Naive thymus-derived CD4-positive, alpha-beta T cell (primary cell): ENCODE measurements at regions of chr9 and their contacts with region 1.

Region 1: DNA sequence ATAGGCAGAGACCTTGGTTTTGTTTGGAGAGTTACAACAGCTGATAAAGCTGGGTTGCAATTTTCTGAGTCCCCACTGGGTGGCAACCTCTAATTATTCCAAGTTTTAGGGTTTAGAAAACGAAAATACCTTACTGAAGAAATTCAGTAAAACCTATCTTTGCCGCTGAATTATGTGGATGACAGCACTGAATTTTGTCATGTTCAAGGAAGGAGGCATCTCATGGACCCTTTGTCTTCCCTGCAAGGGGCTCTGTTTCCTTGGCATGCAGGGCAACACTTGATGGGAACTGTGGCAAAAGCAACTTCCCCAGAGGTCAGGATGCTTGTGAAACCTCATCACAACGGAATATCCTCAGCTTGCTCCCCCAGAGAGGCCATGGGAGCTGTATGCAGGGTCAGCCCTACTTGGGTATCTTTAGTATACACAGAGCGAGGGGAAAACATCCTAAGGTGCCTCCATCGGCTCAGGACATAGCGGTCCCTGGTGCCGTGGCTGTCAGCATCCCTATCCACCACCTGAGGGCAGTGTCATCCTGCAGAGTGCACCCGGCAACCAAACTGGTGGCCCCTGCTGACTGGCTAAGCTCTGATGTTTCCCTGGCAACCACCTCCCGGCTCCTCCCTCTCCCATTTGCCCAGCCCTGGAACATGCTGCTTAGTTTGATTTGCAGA is 123.1 kb downstream of the RXRA start:
- DNase-seq: peak; percentile 58 to 89 (median 85)
- ATAC-seq: peak; percentile 100
- H3K4me3 ChIP-seq: no peak overlapping the region
- H3K4me3 Mint-ChIP-seq: no peak overlapping the region
- H3K27ac ChIP-seq: no peak overlapping the region
- H3K27ac Mint-ChIP-seq: peak overlapping the region in 6 of 9 donors; percentile 6 to 70 (median 48)
- H3K4me1 ChIP-seq: no peaks in the 10 kb centered on the region
- H3K4me1 Mint-ChIP-seq: peaks cover 4 to 12% (median 6%) of the 10 kb centered on the region in 7 donors
- H3K27me3 ChIP-seq: no peaks in the 10 kb centered on the region
- H3K27me3 Mint-ChIP-seq: no peaks in the 10 kb centered on the region

Region 2: DNA sequence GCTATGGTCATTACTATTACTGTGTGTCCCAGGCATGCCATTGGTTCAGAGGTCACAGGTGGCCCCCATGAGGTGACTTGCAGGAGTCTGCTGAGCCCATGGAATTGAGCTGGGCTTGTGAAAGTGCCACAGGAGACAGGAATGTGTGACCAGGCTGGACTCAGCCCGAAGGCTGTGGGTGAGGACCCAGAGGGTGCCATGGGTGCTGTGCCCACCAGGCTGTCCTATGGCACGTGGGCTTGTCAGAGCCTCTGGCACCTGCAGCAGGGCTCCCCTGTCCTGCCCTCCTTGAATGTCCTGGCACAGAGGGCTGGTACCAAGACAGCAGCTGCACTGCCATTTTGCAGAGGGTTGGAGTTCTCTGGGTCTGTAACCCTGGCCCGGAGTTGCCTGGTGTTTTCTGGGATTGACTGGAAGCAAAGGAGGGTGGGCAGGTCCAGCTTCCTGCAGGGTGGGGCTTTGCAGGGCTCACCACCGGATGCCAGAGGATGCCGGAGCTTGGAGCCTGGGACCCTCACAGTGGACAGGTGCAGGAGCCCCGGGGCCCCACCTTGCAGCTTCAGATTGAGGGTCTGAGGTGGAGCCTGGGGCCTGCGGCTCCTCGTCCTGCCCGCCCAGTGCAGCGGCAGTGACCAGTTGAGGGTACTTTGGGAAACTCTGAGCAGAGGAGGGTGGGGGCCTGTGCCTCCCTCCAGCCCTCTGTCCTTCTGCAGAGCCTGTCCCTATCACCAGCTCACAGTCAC is 206.4 kb after region 1 on chr9:
- CTCF ChIA-PET with region 1: no interaction called
- POLR2A ChIA-PET with region 1: no interaction called
- intact Hi-C with region 1: loop called in 1 of 2 experiments (anchors 1 kb)
- DNase-seq: no peak
- ATAC-seq: no peak
- H3K4me3 ChIP-seq: no peak overlapping the region
- H3K4me3 Mint-ChIP-seq: no peak overlapping the region
- H3K27ac ChIP-seq: no peak overlapping the region
- H3K27ac Mint-ChIP-seq: no peak overlapping the region
- H3K4me1 ChIP-seq: no peaks in the 10 kb centered on the region
- H3K4me1 Mint-ChIP-seq: no peaks in the 10 kb centered on the region
- H3K27me3 ChIP-seq: no peaks in the 10 kb centered on the region
- H3K27me3 Mint-ChIP-seq: peaks cover 0 to 6% (median 0%) of the 10 kb centered on the region in 5 donors